Right cardiac atrium (tissue), 5 donors: ENCODE measurements at regions of chr2 and their contacts with region 1.

Region 1: DNA sequence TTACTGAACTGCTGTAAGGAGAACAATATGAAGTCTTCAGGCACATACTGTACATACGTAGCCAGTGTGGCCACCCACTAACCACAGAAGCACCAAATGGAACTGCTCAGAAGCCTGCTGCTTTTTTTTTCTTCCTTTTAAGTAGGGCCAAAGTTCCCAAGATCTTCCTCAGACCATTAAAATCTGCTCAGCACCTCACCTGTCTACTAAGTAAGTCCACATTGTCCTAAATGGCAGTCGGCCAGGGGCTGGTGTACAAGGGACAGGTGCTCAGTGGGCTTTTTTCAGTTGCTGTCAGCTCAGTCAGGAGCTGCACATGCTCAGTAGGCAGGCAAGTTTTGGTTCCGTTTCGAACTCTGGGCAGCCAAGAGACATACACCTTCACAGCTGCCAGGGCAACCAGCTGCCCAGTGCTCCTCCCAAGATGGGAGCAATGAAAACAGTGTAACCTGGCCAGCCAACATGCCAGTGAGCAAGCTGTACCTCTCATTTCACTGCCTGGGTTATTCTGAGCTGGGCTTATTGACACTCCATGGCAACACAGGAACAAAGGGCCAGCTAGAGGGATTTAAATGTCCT is 86.1 kb downstream of the ACVR1 start:
- DNase-seq: peak; percentile 39 to 75 (median 72)
- ATAC-seq: peak; percentile 77 to 88
- H3K4me3 ChIP-seq: no peak overlapping the region
- H3K27ac ChIP-seq: peak overlapping the region; percentile 93
- H3K4me1 ChIP-seq: peaks cover 31% of the 10 kb centered on the region
- H3K27me3 ChIP-seq: no peaks in the 10 kb centered on the region

Region 2: DNA sequence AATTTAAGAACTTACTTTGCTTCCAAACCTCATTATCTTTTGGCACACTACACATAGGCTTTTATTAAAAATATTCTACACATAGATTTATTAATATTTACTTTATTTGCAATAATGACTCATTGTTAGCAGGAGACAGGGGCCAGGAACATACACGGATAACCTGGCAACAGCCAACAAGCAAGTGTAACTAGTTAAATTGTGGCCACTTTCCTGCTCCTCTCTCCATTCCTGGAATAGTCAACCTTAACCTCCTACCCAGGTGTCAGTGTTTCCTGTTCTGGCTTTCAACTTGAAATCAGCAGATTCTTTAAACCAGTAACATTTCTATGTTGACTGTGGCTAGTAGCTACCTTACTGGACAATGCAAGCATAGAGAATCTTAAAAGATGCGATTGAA is 59.6 kb after region 1 on chr2:
- intact Hi-C with region 1: no loop called
- DNase-seq: no peak
- ATAC-seq: no peak
- H3K4me3 ChIP-seq: no peak overlapping the region
- H3K27ac ChIP-seq: no peak overlapping the region
- H3K4me1 ChIP-seq: peaks cover 12% of the 10 kb centered on the region
- H3K27me3 ChIP-seq: no peaks in the 10 kb centered on the region

Region 3: DNA sequence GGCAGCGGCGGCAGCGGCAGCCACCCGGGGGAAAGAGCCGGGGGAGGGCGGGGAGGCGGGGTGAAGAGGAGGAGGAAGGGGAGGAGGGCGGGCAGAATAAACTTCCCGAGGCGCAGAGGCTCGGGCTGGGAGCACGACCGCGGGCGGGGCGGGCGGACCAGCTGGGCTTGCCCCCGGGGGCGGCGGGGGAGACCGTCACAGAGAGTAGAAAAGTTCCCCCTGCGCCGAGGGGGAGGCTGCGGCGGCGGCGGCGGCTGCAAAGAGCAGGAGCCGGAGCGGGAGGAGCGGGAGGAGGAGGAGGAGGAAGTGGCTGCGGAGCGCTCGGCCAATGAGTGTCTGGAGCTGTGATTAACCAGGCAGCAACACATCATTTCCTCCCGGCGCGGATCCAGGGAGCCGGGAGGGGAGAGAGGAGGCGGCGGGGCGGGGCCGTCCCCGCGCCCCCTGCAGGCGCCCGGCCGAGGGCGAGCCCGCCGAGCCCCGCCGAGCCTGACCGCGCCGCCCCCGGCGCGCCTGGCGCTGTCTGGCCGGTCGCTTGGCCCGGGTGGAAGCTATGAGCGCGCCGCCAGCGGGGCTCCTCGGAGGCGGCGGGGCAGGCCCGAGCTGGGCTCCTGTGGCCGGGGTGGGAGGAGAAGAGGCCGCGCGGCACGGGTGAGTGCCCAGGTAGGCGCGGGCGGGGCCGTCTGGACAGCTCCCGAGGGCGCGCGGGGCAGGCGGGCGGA is 86.2 kb after region 1 on chr2 and contains the start of gene ACVR1:
- intact Hi-C with region 1: loop called in 2 of 4 experiments (anchors 5 to 10 kb)
- DNase-seq: peak; percentile 97 to 99 (median 98)
- ATAC-seq: peak; percentile 97 to 98
- H3K4me3 ChIP-seq: peak within 1 kb of the TSS; percentile 94
- H3K27ac ChIP-seq: peak within 1 kb of the TSS; percentile 98
- H3K4me1 ChIP-seq: peaks cover 7% of the 10 kb centered on the region
- H3K27me3 ChIP-seq: no peaks in the 10 kb centered on the region
- total RNA-seq, gene ACVR1: 41.9 to 59.3 (median 50.5) TPM

Region 4: GRCh38 chr2:158099716-158100115 is 309.7 kb after region 1 on chr2:
- intact Hi-C with region 1: no loop called
- DNase-seq: no peak
- ATAC-seq: no peak
- H3K4me3 ChIP-seq: no peak overlapping the region
- H3K27ac ChIP-seq: no peak overlapping the region
- H3K4me1 ChIP-seq: no peaks in the 10 kb centered on the region
- H3K27me3 ChIP-seq: no peaks in the 10 kb centered on the region